AG04450 (cell line): ENCODE measurements at regions of chr7 and their contacts with region 1.

Region 1: DNA sequence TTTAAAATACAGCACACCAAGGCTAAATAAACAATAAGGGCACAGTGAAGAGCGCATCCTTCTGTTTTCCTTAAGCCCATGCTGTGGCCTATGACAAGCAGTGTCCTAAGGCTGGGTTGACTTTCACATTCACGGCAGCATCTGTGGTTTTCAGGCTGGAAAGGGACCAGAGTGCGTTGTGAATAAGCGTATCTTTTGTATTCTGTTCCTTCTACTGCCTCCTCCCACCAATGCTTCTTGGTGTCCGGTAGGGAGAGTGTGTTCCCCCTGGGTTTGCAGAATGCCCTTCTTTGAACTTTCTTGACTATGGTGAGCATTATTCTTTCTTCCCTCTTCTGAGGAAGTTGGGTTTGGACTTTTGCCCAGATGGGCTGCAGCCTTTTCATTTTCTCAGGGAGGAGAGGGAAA is 73.6 kb downstream of the ABCA13 start:
- DNase-seq: no peak
- H3K4me3 ChIP-seq: no peak overlapping the region
- H3K27ac ChIP-seq: no peak overlapping the region
- H3K27me3 ChIP-seq: no peaks in the 10 kb centered on the region
- CTCF ChIP-seq: no peak

Region 2: DNA sequence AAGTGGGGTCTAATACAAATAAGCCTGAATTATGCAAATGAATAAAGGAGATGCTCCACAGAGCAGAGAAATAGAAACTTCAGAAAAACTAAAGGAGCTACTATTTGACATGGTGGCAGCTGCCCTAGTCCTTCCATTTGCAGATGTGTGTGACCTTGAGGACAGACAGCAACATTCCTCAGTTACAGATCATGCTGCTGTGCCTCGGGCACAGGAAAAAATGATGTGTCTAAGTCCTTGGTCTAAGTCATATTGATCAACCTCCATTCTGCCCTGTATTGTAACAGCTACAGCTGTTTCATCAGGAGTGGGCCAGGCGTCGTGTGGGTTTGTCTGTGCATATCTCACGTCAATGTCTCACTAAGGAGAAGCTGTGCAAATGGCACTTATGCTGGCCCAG is 1373.4 kb before region 1 on chr7:
- CTCF ChIA-PET with region 1: no interaction called
- POLR2A ChIA-PET with region 1: no interaction called
- DNase-seq: no peak
- H3K4me3 ChIP-seq: no peak overlapping the region
- H3K27ac ChIP-seq: no peak overlapping the region
- H3K27me3 ChIP-seq: no peaks in the 10 kb centered on the region
- CTCF ChIP-seq: no peak

Region 3: DNA sequence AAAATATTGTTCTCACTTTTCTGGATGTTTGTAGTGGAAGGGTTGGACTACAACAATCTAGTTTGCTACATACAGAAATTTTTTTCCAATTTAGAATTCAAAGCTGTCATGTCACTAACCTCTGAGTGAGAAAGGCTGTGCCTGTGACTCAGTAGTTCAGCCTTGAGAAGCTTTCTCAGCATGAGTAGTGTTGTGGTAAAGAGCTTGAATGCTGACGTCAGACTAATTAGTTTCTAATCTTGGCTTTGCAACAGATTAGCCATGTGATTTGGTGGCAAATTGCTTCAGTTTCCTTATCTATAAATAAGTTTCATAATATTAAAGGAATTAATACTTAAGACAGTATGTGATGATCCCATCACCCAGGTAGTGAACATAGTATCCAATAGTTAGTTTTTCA is 10.2 kb after region 1 on chr7:
- CTCF ChIA-PET with region 1: no interaction called
- POLR2A ChIA-PET with region 1: no interaction called
- DNase-seq: no peak
- H3K4me3 ChIP-seq: no peak overlapping the region
- H3K27ac ChIP-seq: no peak overlapping the region
- H3K27me3 ChIP-seq: no peaks in the 10 kb centered on the region
- CTCF ChIP-seq: no peak

Region 4: DNA sequence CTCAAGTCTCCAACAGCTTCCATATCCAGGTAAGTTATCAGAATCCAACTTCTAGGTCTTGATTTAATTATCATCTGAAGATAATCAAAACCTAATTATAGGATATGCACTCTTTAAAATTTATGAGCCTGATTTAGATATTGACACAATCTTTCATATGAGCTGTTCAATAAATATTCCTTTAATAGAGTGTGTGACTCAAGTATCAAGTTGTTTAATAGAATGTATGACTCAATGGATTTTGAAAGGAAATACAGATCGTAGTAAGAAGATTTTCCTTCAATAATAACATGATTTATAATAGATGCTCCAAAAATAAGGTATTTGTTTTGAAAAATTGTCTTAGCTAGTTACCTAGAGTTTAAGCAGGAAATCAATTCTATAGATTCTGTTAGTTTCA is 24.2 kb after region 1 on chr7:
- CTCF ChIA-PET with region 1: interaction called, 10 read pairs
- POLR2A ChIA-PET with region 1: no interaction called
- DNase-seq: no peak
- H3K4me3 ChIP-seq: no peak overlapping the region
- H3K27ac ChIP-seq: no peak overlapping the region
- H3K27me3 ChIP-seq: no peaks in the 10 kb centered on the region
- CTCF ChIP-seq: no peak